CD8-positive, alpha-beta T cell (primary cell): ENCODE measurements at regions of chrX and their contacts with region 1.

Region 1: DNA sequence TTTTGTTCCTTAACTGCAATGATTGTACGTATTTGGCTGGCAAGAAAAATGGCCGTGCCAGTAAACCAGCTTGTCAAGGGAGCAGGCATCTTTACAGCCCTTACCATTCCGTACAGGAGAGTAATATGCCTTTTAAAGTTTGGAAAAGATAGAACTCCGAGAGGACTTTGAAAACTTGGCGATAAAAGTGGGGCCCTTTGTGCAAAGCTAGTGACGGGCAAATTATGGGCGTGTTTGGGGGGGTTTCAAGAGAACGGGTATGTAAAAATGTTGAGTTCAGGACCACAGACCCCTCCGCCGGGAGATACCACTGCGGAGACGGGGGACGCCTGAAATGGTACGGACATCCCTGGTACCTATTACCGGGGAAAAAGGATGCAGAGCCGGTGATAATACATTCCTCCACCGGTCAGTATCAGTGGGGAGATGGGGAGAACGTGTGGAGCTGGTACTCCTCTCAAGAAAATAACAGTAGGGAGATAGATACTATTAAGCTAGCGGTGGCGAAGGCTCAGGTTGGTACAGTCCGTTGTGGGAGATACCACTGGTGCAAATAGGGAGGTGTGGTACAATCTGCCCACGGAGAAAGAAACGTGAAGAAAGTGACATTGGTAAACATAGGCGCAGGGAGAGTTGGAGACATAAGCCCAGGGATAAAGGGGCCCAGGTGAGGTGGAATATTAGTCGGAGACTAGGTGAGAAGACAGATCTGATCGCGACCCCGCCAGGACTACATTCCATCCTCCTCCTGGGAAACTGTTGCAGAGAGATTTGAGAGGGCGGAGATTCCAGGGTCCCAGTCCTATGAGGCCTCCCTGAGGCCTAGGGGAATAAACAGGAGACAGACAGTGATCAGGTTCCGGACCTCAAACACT is 14.5 kb downstream of the SPACA5 start:
- DNase-seq: peak; percentile 51 to 89 (median 76)
- ATAC-seq: peak; percentile 64
- H3K4me3 ChIP-seq: peak overlapping the region; percentile 65 to 74
- H3K4me3 Mint-ChIP-seq: peak overlapping the region; percentile 95
- H3K27ac ChIP-seq: peak overlapping the region; percentile 73 to 95
- H3K27ac Mint-ChIP-seq: peak overlapping the region; percentile 98
- H3K4me1 ChIP-seq: peaks cover 3% of the 10 kb centered on the region
- H3K4me1 Mint-ChIP-seq: peaks cover 15% of the 10 kb centered on the region
- H3K27me3 ChIP-seq: no peaks in the 10 kb centered on the region
- H3K27me3 Mint-ChIP-seq: no peaks in the 10 kb centered on the region
- CTCF ChIP-seq: no peak

Region 2: DNA sequence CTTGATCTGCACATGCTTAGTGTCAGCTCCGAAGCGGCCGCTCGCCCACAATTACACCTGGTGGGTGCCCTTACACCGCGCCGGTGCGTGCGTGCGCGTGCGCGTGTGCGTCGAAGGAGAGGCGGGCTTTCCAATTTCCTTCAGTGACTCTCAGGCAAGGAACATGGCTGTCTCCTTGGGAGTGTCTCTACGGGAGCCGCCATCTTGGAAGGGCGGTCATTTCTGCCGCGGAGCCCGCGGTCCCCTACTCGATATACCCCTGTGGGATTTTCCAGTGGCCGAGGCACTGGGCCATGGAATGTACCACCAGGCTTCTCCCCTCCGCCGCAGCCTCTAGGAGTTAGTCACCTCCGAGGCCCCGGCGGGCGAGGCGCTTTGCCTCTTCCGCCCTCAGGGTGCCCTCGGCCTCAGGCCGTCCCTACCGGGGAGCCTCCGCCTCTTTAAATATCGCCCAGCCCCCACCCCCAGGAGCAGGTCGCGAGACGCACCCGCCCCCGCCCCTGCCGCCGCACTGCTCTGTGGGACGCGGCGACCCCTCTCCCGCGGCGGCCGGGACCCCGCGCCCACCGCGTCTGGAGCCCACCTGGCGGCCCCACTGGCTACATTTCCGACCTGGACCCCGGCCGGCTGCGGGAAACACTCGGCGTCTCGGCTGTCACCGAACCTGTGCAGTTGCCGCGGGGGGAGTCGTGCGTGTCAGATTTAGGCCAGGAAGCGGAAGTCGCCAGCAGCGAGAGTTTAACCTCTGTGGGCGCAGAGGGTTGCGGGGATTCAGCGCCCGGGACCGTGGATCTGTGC is 538.6 kb before region 1 on chrX and contains the start of gene ZNF41:
- CTCF ChIA-PET with region 1: no interaction called
- POLR2A ChIA-PET with region 1: no interaction called
- intact Hi-C with region 1: loop called in 1 of 2 experiments (anchors 5 kb)
- DNase-seq: peak; percentile 60 to 92 (median 79)
- ATAC-seq: peak; percentile 83
- H3K4me3 ChIP-seq: peak within 1 kb of the TSS; percentile 81 to 86
- H3K4me3 Mint-ChIP-seq: peak within 1 kb of the TSS; percentile 94
- H3K27ac ChIP-seq: peak within 1 kb of the TSS; percentile 81 to 88
- H3K27ac Mint-ChIP-seq: peak within 1 kb of the TSS; percentile 99
- H3K4me1 ChIP-seq: peaks cover 18% of the 10 kb centered on the region
- H3K4me1 Mint-ChIP-seq: peaks cover 42% of the 10 kb centered on the region
- H3K27me3 ChIP-seq: no peaks in the 10 kb centered on the region
- H3K27me3 Mint-ChIP-seq: no peaks in the 10 kb centered on the region
- CTCF ChIP-seq: no peak
- total RNA-seq, gene ZNF41: 2.9 to 4.9 TPM

Region 3: GRCh38 chrX:47560831-47561652 is 460.2 kb before region 1 on chrX and contains the start of gene ARAF:
- CTCF ChIA-PET with region 1: no interaction called
- POLR2A ChIA-PET with region 1: no interaction called
- intact Hi-C with region 1: loop called (anchors 5 to 10 kb)
- DNase-seq: peak; percentile 86 to 99 (median 94)
- ATAC-seq: peak; percentile 87
- H3K4me3 ChIP-seq: peak within 1 kb of the TSS; percentile 58 to 91
- H3K4me3 Mint-ChIP-seq: peak within 1 kb of the TSS; percentile 95
- H3K27ac ChIP-seq: peak within 1 kb of the TSS; percentile 98 to 99
- H3K27ac Mint-ChIP-seq: peak within 1 kb of the TSS; percentile 99
- H3K4me1 ChIP-seq: peaks cover 29% of the 10 kb centered on the region
- H3K4me1 Mint-ChIP-seq: peaks cover 46% of the 10 kb centered on the region
- H3K27me3 ChIP-seq: no peaks in the 10 kb centered on the region
- H3K27me3 Mint-ChIP-seq: no peaks in the 10 kb centered on the region
- CTCF ChIP-seq: no peak
- total RNA-seq, gene ARAF: 125 to 134 TPM

Region 4: GRCh38 chrX:47658684-47659515 is 362.4 kb before region 1 on chrX and contains the start of gene UXT:
- CTCF ChIA-PET with region 1: no interaction called
- POLR2A ChIA-PET with region 1: no interaction called
- intact Hi-C with region 1: loop called in 1 of 2 experiments (anchors 5 kb)
- DNase-seq: peak; percentile 80 to 95 (median 91)
- ATAC-seq: peak; percentile 81
- H3K4me3 ChIP-seq: peak within 1 kb of the TSS; percentile 86 to 92
- H3K4me3 Mint-ChIP-seq: peak within 1 kb of the TSS; percentile 90
- H3K27ac ChIP-seq: peak within 1 kb of the TSS; percentile 100
- H3K27ac Mint-ChIP-seq: peak within 1 kb of the TSS; percentile 99
- H3K4me1 ChIP-seq: peaks cover 16% of the 10 kb centered on the region
- H3K4me1 Mint-ChIP-seq: peaks cover 15% of the 10 kb centered on the region
- H3K27me3 ChIP-seq: no peaks in the 10 kb centered on the region
- H3K27me3 Mint-ChIP-seq: no peaks in the 10 kb centered on the region
- CTCF ChIP-seq: no peak
- total RNA-seq, gene UXT: 202 TPM

Region 5: DNA sequence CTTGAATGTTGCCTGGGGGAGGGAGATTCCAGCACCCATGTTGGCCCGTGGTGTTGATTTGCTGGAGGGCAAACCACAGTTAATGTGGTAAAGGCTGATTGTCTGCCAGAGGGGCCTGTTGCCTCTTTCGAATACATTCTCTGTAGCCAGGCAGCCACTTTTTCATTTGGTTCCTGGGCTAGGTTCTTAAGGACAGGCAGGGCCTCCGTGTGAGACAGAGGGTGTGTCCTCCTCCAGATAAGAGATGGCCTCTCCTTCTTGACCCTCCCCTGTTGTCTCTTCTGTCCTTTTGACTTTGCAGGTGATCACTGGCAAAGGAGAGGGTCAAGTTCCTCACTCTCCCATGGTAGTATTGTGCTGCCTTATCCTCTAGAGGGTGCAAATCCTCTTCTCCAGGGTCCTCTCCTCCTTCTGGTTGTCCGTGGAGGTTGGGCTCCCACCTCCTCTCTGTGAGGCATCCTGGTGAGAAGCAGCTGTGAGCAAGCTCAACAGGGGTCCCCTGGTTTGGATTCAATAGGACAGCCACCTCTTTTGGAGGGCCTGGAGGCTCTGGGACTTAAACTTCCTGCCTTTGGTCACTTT is 62.4 kb before region 1 on chrX:
- CTCF ChIA-PET with region 1: interaction called, 38 read pairs
- POLR2A ChIA-PET with region 1: no interaction called
- intact Hi-C with region 1: loop called in 1 of 2 experiments (anchors 1 kb)
- DNase-seq: peak in 4 of 9 experiments; percentile 10 to 54 (median 26)
- ATAC-seq: peak; percentile 75
- H3K4me3 ChIP-seq: no peak overlapping the region
- H3K4me3 Mint-ChIP-seq: no peak overlapping the region
- H3K27ac ChIP-seq: no peak overlapping the region
- H3K27ac Mint-ChIP-seq: no peak overlapping the region
- H3K4me1 ChIP-seq: no peaks in the 10 kb centered on the region
- H3K4me1 Mint-ChIP-seq: no peaks in the 10 kb centered on the region
- H3K27me3 ChIP-seq: no peaks in the 10 kb centered on the region
- H3K27me3 Mint-ChIP-seq: no peaks in the 10 kb centered on the region
- CTCF ChIP-seq: peak; percentile 21

Region 6: GRCh38 chrX:48045410-48046331 is 24.4 kb after region 1 on chrX:
- CTCF ChIA-PET with region 1: no interaction called
- POLR2A ChIA-PET with region 1: no interaction called
- intact Hi-C with region 1: no loop called
- DNase-seq: no peak
- ATAC-seq: no peak
- H3K4me3 ChIP-seq: no peak overlapping the region
- H3K4me3 Mint-ChIP-seq: no peak overlapping the region
- H3K27ac ChIP-seq: no peak overlapping the region
- H3K27ac Mint-ChIP-seq: no peak overlapping the region
- H3K4me1 ChIP-seq: no peaks in the 10 kb centered on the region
- H3K4me1 Mint-ChIP-seq: no peaks in the 10 kb centered on the region
- H3K27me3 ChIP-seq: no peaks in the 10 kb centered on the region
- H3K27me3 Mint-ChIP-seq: no peaks in the 10 kb centered on the region
- CTCF ChIP-seq: no peak